Activated naive CD4-positive, alpha-beta T cell treated with anti-CD3 and anti-CD28 coated beads for 36 hours (primary cell): ENCODE measurements at regions of chr16 and their contacts with region 1.

Region 1: GRCh38 chr16:30786936-30787612 is at the start of gene ZNF629:
- DNase-seq: peak; percentile 37
- H3K4me3 Mint-ChIP-seq: peak within 1 kb of the TSS; percentile 82
- H3K27ac Mint-ChIP-seq: no peak within 1 kb of the TSS
- H3K4me1 Mint-ChIP-seq: peaks cover 16% of the 10 kb centered on the region
- H3K27me3 Mint-ChIP-seq: no peaks in the 10 kb centered on the region
- total RNA-seq, gene ZNF629: 2.1 to 2.3 TPM

Region 2: DNA sequence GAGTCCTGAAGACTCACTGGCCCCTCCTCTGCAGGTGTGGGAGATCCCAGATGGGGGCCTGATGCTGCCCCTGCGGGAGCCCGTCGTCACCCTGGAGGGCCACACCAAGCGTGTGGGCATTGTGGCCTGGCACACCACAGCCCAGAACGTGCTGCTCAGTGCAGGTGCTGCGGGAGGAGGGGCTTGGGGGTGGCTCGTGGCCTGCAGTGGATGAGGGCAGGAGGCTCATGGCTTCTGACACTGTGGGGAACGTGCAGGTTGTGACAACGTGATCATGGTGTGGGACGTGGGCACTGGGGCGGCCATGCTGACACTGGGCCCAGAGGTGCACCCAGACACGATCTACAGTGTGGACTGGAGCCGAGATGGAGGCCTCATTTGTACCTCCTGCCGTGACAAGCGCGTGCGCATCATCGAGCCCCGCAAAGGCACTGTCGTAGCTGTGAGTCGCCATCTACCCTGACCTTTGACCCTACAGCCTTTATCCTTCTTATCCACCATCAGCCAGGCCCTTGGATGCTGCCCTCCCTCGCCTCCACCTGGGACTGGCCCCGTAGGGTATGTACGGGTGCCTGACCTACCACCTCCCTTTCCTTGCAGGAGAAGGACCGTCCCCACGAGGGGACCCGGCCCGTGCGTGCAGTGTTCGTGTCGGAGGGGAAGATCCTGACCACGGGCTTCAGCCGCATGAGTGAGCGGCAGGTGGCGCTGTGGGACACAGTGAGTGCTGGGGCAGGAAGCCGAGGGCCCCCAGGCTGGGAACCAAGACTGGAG is 600.1 kb before region 1 on chr16:
- CTCF ChIA-PET with region 1: no interaction called
- intact Hi-C with region 1: no loop called
- DNase-seq: peak; percentile 87
- H3K4me3 Mint-ChIP-seq: peak overlapping the region; percentile 100
- H3K27ac Mint-ChIP-seq: peak overlapping the region; percentile 100
- H3K4me1 Mint-ChIP-seq: peaks cover 21% of the 10 kb centered on the region
- H3K27me3 Mint-ChIP-seq: no peaks in the 10 kb centered on the region

Region 3: GRCh38 chr16:30758988-30759521 is 28.0 kb before region 1 on chr16:
- CTCF ChIA-PET with region 1: no interaction called
- intact Hi-C with region 1: no loop called
- DNase-seq: no peak
- H3K4me3 Mint-ChIP-seq: no peak overlapping the region
- H3K27ac Mint-ChIP-seq: no peak overlapping the region
- H3K4me1 Mint-ChIP-seq: peaks cover 24% of the 10 kb centered on the region
- H3K27me3 Mint-ChIP-seq: no peaks in the 10 kb centered on the region

Region 4: GRCh38 chr16:30805370-30806169 is 18.5 kb after region 1 on chr16:
- CTCF ChIA-PET with region 1: interaction called, 4 read pairs
- intact Hi-C with region 1: loop called (anchors 1 kb)
- DNase-seq: peak; percentile 60
- H3K4me3 Mint-ChIP-seq: peak overlapping the region; percentile 67
- H3K27ac Mint-ChIP-seq: peak overlapping the region; percentile 31
- H3K4me1 Mint-ChIP-seq: peaks cover 19% of the 10 kb centered on the region
- H3K27me3 Mint-ChIP-seq: no peaks in the 10 kb centered on the region